ENCODE measurements at regions of chr2 and their contacts with region 1.

Region 1: DNA sequence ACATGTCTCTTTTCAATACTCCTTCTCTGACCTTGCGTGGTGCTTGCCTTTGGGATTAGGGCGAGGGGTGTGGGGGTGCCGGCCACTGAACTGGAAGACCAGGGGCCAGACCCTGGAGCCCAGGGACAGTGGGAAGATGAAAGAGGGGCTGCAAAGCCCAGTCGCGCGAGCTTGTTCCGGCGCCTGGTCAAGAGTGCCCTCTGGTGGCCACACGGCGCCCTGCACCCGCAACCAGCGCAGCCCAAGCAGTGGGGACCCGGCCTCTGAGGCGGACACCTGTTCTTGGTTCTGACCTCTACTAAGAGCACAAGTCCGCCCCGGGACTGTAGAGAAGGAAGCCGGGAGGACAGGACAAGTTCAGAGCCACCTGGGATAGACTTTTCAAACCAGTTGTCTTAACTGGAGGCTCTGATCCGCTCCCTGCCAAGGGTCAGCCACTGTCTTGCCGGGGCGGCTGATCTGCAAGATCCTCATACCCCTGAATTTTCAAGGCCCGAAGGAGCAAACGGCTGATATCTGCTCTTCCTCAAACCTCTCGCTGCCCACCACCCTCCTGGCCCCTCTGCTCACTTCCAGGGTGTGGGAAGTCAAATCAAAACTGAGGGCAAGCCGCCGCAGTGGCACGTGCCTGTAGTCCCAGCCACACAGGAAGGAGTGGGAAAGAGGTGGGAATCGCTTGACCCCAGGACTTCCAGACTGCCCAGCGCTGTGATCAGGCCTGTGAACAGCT is 14.9 kb upstream of the MSH6 start:
- DNase-seq: peak; percentile 69 to 78 (median 72)
- ATAC-seq: peak; percentile 94
- H3K4me3 ChIP-seq: no peak overlapping the region
- H3K27ac ChIP-seq: no peak overlapping the region
- H3K4me1 ChIP-seq: peaks cover 0 to 5% of the 10 kb centered on the region in 2 experiments; a peak in 2 of 5 replicates
- H3K27me3 ChIP-seq: peaks cover 12 to 15% of the 10 kb centered on the region in 2 experiments
- CTCF ChIP-seq: peak; percentile 88 to 93 (median 90)
- EP300 ChIP-seq: no peak
- POLR2A ChIP-seq: no peak
- RAD21 ChIP-seq: peak; percentile 94 to 96

Region 2: DNA sequence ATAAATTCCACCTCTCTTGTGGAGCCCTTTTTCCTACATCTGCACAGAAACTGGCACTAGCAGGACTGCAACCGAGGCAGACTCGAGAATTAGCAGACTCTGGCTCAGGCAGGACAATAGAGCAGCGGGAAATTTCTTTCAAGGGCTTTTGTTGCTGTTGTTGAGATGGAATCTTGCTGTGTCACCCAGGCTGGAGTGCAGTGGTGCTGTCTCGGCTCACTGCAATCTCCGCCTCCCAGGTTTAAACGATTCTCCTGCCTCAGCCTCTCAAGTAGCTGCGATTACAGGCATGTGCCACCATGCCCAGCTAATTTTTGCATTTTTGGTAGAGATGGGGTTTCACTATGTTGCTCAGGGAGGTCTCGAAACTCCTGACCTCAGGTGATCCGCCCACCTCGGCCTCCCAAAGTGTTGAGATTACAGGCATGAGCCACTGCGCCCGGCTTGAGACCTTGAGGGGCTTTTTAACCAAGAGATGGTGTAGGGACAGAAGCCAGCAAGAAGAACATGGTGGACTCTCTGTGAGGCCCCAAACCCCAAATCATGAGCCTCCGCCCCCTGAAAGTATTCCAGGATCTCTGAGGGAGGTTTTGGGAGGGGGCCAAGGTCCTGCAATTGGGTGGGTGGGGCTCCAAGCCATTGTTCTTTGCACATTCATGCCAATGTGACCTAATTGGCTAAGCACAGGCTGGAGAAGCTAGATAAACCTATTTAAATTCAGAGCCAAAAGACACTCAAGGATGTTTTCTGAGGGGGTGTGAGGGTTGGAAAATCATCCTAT is 433.5 kb before region 1 on chr2:
- CTCF ChIA-PET with region 1: interaction called, 4 read pairs
- POLR2A ChIA-PET with region 1: no interaction called
- in situ Hi-C with region 1: loop called (anchors 5 kb)
- intact Hi-C with region 1: loop called (anchors 1 kb)
- DNase-seq: peak in 1 of 4 experiments; percentile 81
- ATAC-seq: peak; percentile 67
- H3K4me3 ChIP-seq: peak overlapping the region; percentile 0; the same call in 1 of the 2 replicates
- H3K27ac ChIP-seq: peak overlapping the region; percentile 68
- H3K4me1 ChIP-seq: peaks cover 19 to 26% of the 10 kb centered on the region in 2 experiments
- H3K27me3 ChIP-seq: no peaks in the 10 kb centered on the region
- CTCF ChIP-seq: no peak
- EP300 ChIP-seq: peak; percentile 58; the same call in 1 of the 2 replicates
- POLR2A ChIP-seq: no peak
- RAD21 ChIP-seq: no peak

Region 3: GRCh38 chr2:47339745-47340541 is 428.1 kb before region 1 on chr2:
- CTCF ChIA-PET with region 1: interaction called, 4 read pairs
- POLR2A ChIA-PET with region 1: no interaction called
- in situ Hi-C with region 1: loop called (anchors 5 kb)
- intact Hi-C with region 1: loop called (anchors 1 kb)
- DNase-seq: no peak
- ATAC-seq: no peak
- H3K4me3 ChIP-seq: no peak overlapping the region
- H3K27ac ChIP-seq: peak overlapping the region; percentile 30; the same call in 1 of the 3 replicates
- H3K4me1 ChIP-seq: peaks cover 23 to 28% of the 10 kb centered on the region in 2 experiments
- H3K27me3 ChIP-seq: no peaks in the 10 kb centered on the region
- CTCF ChIP-seq: no peak
- EP300 ChIP-seq: no peak
- POLR2A ChIP-seq: no peak
- RAD21 ChIP-seq: no peak

Region 4: GRCh38 chr2:47437287-47437686 is 330.8 kb before region 1 on chr2:
- CTCF ChIA-PET with region 1: interaction called, 27 read pairs
- POLR2A ChIA-PET with region 1: no interaction called
- in situ Hi-C with region 1: loop called (anchors 10 kb)
- intact Hi-C with region 1: loop called (anchors 2 kb)
- DNase-seq: peak in 1 of 4 experiments; percentile 10
- ATAC-seq: no peak; the same call in 2 of the 3 replicates
- H3K4me3 ChIP-seq: no peak overlapping the region
- H3K27ac ChIP-seq: no peak overlapping the region
- H3K4me1 ChIP-seq: no peaks in the 10 kb centered on the region
- H3K27me3 ChIP-seq: no peaks in the 10 kb centered on the region
- CTCF ChIP-seq: peak in 2 of 3 experiments; percentile 9 to 53; a peak in 2 of 6 replicates
- EP300 ChIP-seq: no peak
- POLR2A ChIP-seq: no peak
- RAD21 ChIP-seq: peak; percentile 53 to 85

Region 5: DNA sequence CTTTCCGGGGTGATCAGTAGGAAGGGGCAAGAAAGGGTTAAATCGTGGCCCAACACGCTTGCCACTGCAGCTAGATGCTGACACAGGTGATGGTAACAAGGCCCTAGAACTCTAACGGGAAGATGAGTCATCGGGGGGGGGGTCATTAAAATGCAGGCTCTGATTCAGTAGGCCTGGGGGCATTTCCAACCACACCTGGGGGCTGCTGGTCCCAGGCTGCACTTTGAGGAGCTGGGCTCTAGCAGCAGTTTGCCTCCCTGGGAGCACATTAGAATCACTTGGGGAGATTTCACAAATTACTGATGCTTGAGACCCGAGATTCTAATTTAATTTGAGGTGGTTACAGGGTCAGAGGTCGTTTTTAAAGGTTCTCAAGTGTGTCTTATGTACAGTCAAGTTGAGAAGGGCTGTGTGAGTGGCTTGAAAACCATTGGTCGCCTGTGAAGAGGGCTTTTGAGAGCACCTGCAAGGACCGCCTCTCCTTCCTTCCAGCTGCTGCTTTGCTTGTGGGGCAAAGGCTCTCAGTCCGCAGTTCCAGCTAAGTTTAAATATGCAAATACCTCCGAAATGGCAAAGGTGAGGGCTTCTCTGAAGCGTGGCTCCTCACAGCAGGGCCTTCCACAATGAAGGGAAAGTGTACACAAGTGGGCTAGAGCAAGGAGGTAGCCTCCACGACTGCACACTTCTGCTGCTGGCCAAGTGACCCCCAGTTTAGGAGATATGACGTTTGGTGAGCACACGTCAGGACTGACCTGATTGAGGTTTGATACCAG is 113.1 kb before region 1 on chr2:
- CTCF ChIA-PET with region 1: no interaction called
- POLR2A ChIA-PET with region 1: interaction called, 3 read pairs
- in situ Hi-C with region 1: no loop called
- intact Hi-C with region 1: loop called (anchors 5 kb)
- DNase-seq: no peak
- ATAC-seq: no peak
- H3K4me3 ChIP-seq: no peak overlapping the region
- H3K27ac ChIP-seq: no peak overlapping the region
- H3K4me1 ChIP-seq: peaks cover 0 to 9% of the 10 kb centered on the region in 2 experiments; a peak in 3 of 5 replicates
- H3K27me3 ChIP-seq: peaks cover 15 to 70% of the 10 kb centered on the region in 2 experiments
- CTCF ChIP-seq: no peak
- EP300 ChIP-seq: no peak
- POLR2A ChIP-seq: no peak
- RAD21 ChIP-seq: no peak

Region 6: DNA sequence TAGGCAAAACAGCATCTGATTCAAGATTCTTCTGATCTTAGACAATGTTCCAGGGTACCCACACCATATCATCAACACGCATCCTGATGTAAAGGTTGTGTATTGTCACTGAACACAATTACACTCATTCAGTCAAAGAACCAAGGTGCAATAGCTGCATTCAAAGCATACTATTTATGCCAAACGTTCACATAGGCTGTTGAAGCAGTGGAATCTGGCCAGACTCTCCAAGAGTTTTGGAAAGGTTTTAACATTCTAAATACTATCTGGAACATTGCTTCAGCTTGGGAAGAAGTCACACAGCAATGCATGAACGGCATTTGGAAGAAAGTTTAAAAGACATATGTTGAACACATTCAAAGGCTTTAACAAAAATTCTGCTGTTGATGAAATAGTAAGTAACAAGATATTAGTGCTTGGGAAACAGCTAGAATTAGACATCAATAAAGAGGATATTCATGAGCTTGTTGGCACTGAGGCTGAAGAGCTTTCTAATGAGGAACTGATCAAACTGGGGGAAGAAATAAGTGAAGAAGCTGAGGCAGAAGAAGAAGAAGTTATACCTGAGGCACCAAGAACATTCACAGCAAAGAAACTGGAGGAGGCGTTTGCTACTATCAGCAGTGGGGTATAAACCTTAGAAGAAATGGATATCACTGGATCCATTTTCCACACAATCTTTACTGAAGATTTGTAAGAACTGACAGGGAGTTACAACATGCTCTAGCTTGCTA is 32.7 kb before region 1 on chr2:
- CTCF ChIA-PET with region 1: no interaction called
- POLR2A ChIA-PET with region 1: no interaction called
- in situ Hi-C with region 1: no loop called
- intact Hi-C with region 1: no loop called
- DNase-seq: no peak
- ATAC-seq: no peak
- H3K4me3 ChIP-seq: no peak overlapping the region
- H3K27ac ChIP-seq: no peak overlapping the region
- H3K4me1 ChIP-seq: no peaks in the 10 kb centered on the region
- H3K27me3 ChIP-seq: peaks cover 5 to 16% of the 10 kb centered on the region in 2 experiments; a peak in 3 of 5 replicates
- CTCF ChIP-seq: no peak
- EP300 ChIP-seq: no peak
- POLR2A ChIP-seq: no peak
- RAD21 ChIP-seq: no peak

Region 7: DNA sequence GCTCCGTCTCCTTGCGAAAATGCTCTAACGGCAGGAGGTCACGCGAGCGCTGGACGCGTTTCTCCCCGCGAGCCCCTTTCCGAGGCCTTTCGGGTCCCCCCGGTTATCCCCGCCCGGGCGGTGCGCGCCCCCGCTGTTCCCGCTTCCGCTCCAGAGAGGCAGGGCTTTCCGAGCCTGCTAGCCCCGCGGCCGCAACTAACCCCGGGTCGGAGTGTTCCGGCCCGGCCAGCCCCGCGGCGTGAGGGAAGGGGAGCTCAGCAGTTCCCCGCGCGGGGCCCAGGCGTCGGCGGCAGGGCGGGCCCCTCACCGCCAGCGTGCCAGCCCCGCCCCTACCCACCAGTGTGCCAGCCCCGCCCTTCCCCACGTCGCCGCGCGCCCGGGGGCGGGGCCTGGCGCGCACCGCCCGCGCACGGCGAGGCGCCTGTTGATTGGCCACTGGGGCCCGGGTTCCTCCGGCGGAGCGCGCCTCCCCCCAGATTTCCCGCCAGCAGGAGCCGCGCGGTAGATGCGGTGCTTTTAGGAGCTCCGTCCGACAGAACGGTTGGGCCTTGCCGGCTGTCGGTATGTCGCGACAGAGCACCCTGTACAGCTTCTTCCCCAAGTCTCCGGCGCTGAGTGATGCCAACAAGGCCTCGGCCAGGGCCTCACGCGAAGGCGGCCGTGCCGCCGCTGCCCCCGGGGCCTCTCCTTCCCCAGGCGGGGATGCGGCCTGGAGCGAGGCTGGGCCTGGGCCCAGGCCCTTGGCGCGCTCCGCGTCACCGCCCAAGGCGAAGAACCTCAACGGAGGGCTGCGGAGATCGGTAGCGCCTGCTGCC is 14.8 kb after region 1 on chr2 and contains the start of gene MSH6:
- CTCF ChIA-PET with region 1: no interaction called
- POLR2A ChIA-PET with region 1: interaction called, 10 read pairs
- in situ Hi-C with region 1: no loop called
- intact Hi-C with region 1: no loop called
- DNase-seq: peak; percentile 92 to 97 (median 96)
- ATAC-seq: peak; percentile 89
- H3K4me3 ChIP-seq: peak within 1 kb of the TSS; percentile 97
- H3K27ac ChIP-seq: peak within 1 kb of the TSS; percentile 97
- H3K4me1 ChIP-seq: peaks cover 9 to 30% of the 10 kb centered on the region in 2 experiments; a peak in 4 of 5 replicates
- H3K27me3 ChIP-seq: no peaks in the 10 kb centered on the region
- CTCF ChIP-seq: no peak
- EP300 ChIP-seq: no peak
- POLR2A ChIP-seq: peak; percentile 87
- RAD21 ChIP-seq: no peak
- polyA plus RNA-seq, gene MSH6: 15.3 to 30.3 TPM